ENCODE measurements at regions of chr6 and their contacts with region 1.

Region 1: GRCh38 chr6:6659600-6660327 is 71.2 kb downstream of the LY86 start:
- DNase-seq: no peak
- H3K4me3 Mint-ChIP-seq: no peak overlapping the region
- H3K27ac Mint-ChIP-seq: peak overlapping the region; percentile 89
- H3K4me1 Mint-ChIP-seq: peaks cover 84% of the 10 kb centered on the region
- H3K27me3 Mint-ChIP-seq: no peaks in the 10 kb centered on the region

Region 2: GRCh38 chr6:6515691-6516607 is 143.8 kb before region 1 on chr6:
- intact Hi-C with region 1: loop called (anchors 1 kb)
- DNase-seq: peak; percentile 38
- H3K4me3 Mint-ChIP-seq: no peak overlapping the region
- H3K27ac Mint-ChIP-seq: peak overlapping the region; percentile 21
- H3K4me1 Mint-ChIP-seq: peaks cover 18% of the 10 kb centered on the region
- H3K27me3 Mint-ChIP-seq: peaks cover 80% of the 10 kb centered on the region

Region 3: DNA sequence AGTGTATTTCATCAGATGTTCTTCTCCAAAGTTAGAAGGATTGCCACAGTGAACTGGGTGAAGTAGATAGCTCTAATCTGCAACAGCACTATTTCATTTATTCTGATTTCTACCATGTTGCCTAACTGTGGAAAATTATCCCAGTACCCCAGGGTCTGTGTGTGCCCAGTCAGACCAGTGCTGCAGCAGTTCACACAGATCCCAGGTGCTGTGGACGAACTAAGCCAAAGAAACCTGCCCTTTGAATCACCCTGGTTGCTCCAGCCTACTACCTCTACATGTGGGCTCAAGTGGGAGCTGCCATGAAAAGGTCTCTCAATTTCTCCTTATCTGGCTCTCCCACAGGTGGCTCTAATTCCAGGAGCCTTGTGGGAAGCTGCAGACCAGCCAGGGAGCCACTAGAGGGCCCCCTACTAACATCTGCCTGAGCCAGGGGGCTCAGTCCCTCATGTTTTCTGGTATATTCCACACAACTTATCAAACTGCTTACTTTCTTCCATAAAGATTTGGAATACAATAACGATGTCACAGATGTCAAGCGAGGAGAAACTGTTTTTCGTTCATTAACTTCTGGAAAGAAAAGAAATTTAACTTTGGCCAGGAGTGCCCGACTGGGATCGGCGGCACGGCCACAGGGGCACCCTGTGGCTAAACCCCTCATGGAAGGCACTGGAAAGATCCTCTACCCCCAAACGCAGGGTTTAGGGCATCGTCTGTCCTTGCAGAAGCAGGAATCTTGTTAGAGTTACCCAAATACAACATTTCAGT is 102.8 kb before region 1 on chr6:
- intact Hi-C with region 1: loop called (anchors 5 kb)
- DNase-seq: peak; percentile 15
- H3K4me3 Mint-ChIP-seq: no peak overlapping the region
- H3K27ac Mint-ChIP-seq: no peak overlapping the region
- H3K4me1 Mint-ChIP-seq: peaks cover 49% of the 10 kb centered on the region
- H3K27me3 Mint-ChIP-seq: peaks cover 16% of the 10 kb centered on the region

Region 4: GRCh38 chr6:6610031-6610591 is 49.7 kb before region 1 on chr6:
- intact Hi-C with region 1: loop called (anchors 2 kb)
- DNase-seq: peak; percentile 35
- H3K4me3 Mint-ChIP-seq: no peak overlapping the region
- H3K27ac Mint-ChIP-seq: peak overlapping the region; percentile 72
- H3K4me1 Mint-ChIP-seq: peaks cover 67% of the 10 kb centered on the region
- H3K27me3 Mint-ChIP-seq: no peaks in the 10 kb centered on the region

Region 5: DNA sequence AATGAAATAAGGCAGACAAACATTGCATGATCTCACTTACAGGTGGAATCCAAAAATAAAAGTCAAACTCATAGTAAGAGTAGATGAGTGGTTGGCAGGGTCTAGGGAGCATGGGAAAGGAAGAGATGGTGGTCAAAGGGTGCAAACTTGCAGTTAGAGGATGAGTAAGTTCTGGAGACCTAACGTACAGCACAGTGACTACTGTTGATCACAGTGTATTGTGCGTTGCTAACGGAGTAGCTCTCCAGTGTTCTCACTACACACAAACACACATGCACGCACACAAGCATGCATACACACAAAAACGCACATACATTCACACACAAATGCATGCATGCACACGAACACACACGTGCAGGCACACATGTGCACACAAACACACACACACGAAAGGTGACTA is 16.4 kb before region 1 on chr6:
- intact Hi-C with region 1: loop called (anchors 1 kb)
- DNase-seq: peak; percentile 31
- H3K4me3 Mint-ChIP-seq: no peak overlapping the region
- H3K27ac Mint-ChIP-seq: peak overlapping the region; percentile 58
- H3K4me1 Mint-ChIP-seq: peaks cover 26% of the 10 kb centered on the region
- H3K27me3 Mint-ChIP-seq: no peaks in the 10 kb centered on the region

Region 6: GRCh38 chr6:6683969-6684833 is 24.4 kb after region 1 on chr6:
- intact Hi-C with region 1: loop called (anchors 2 kb)
- DNase-seq: peak; percentile 14
- H3K4me3 Mint-ChIP-seq: peak overlapping the region; percentile 2
- H3K27ac Mint-ChIP-seq: peak overlapping the region; percentile 11
- H3K4me1 Mint-ChIP-seq: peaks cover 58% of the 10 kb centered on the region
- H3K27me3 Mint-ChIP-seq: peaks cover 6% of the 10 kb centered on the region